GM12878 (cell line): ENCODE measurements at regions of chr15 and their contacts with region 1.

Region 1: DNA sequence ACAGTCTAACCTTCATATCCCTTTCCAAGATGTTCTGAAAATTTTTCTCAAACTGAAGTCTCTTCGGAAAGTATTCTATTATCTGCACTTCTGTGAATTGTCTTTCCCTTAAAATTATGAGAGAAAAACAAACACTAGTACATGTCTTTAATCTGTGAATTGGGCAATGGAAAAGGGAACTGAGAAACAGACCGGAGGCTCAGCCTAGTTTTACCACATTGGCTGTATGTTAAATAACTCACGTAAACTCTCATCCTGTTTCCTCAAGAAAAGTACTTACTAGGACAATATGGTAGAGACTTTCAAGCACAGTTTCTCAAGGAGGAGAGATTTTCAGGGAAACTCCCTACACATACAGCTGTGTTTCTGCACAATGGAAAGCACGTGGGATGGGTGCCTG is 982.2 kb upstream of the SEMA6D start:
- DNase-seq: peak; percentile 13
- ATAC-seq: peak; percentile 79
- H3K4me3 ChIP-seq: no peak overlapping the region
- H3K27ac ChIP-seq: no peak overlapping the region
- H3K4me1 ChIP-seq: no peaks in the 10 kb centered on the region
- H3K27me3 ChIP-seq: no peaks in the 10 kb centered on the region
- CTCF ChIP-seq: no peak
- EP300 ChIP-seq: no peak
- POLR2A ChIP-seq: no peak
- RAD21 ChIP-seq: no peak

Region 2: DNA sequence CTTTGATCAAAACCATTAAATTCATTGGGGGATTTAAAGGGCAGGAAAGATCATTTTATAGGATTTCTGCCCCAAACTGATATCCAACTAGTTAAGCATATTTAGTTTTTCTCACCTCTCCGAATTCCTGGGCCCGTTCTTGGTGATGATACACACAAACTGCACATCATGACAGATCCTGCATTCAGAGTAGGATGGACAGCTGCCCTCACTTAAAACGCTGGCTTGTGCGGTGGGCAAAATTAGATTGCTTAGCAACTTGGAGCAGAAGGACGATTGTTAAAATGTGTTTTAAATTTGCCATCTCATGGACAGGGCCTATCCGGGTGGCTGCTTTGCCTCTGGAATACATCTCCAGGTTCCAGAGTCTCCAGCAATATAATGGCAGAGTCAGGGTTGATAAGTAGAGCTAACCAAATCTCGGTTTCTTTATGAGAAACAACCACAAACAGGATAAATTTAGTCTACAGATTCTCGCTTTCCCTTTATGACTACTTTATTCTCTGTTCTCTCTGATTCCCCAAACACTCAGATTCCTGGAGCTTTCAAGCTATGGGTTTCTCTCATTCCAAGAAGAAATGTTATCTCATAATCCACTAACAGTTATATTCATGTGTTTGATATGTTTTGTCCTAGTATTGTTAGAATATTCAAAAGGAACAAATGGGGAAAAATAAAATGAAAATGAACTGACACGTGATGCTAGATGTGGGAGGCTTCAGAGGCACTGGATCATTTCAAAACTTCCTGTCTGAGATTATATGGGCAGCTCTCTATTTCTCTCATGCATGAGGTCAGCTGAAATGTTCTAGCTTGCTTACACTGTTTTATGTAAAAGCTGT is 31.9 kb before region 1 on chr15:
- CTCF ChIA-PET with region 1: no interaction called
- POLR2A ChIA-PET with region 1: no interaction called
- RAD21 ChIA-PET with region 1: interaction called, 7 read pairs
- SMC1A ChIA-PET with region 1: interaction called, 23 read pairs
- in situ Hi-C with region 1: no loop called
- intact Hi-C with region 1: no loop called
- DNase-seq: peak; percentile 15
- ATAC-seq: peak; percentile 83
- H3K4me3 ChIP-seq: no peak overlapping the region
- H3K27ac ChIP-seq: peak overlapping the region; percentile 55
- H3K4me1 ChIP-seq: no peaks in the 10 kb centered on the region
- H3K27me3 ChIP-seq: no peaks in the 10 kb centered on the region
- CTCF ChIP-seq: no peak
- EP300 ChIP-seq: no peak
- POLR2A ChIP-seq: no peak
- RAD21 ChIP-seq: no peak

Region 3: GRCh38 chr15:47293466-47294162 is 558.5 kb after region 1 on chr15:
- CTCF ChIA-PET with region 1: no interaction called
- POLR2A ChIA-PET with region 1: no interaction called
- RAD21 ChIA-PET with region 1: no interaction called
- SMC1A ChIA-PET with region 1: no interaction called
- in situ Hi-C with region 1: no loop called
- intact Hi-C with region 1: no loop called
- DNase-seq: no peak
- ATAC-seq: no peak
- H3K4me3 ChIP-seq: no peak overlapping the region
- H3K27ac ChIP-seq: no peak overlapping the region
- H3K4me1 ChIP-seq: no peaks in the 10 kb centered on the region
- H3K27me3 ChIP-seq: no peaks in the 10 kb centered on the region
- CTCF ChIP-seq: no peak
- EP300 ChIP-seq: no peak
- POLR2A ChIP-seq: no peak
- RAD21 ChIP-seq: no peak